AG04449 (cell line): ENCODE measurements at regions of chr17 and their contacts with region 1.

Region 1: GRCh38 chr17:42193969-42194899 is at the start of gene GHDC:
- DNase-seq: peak; percentile 10
- H3K4me3 ChIP-seq: peak within 1 kb of the TSS; percentile 81
- CTCF ChIP-seq: no peak

Region 2: DNA sequence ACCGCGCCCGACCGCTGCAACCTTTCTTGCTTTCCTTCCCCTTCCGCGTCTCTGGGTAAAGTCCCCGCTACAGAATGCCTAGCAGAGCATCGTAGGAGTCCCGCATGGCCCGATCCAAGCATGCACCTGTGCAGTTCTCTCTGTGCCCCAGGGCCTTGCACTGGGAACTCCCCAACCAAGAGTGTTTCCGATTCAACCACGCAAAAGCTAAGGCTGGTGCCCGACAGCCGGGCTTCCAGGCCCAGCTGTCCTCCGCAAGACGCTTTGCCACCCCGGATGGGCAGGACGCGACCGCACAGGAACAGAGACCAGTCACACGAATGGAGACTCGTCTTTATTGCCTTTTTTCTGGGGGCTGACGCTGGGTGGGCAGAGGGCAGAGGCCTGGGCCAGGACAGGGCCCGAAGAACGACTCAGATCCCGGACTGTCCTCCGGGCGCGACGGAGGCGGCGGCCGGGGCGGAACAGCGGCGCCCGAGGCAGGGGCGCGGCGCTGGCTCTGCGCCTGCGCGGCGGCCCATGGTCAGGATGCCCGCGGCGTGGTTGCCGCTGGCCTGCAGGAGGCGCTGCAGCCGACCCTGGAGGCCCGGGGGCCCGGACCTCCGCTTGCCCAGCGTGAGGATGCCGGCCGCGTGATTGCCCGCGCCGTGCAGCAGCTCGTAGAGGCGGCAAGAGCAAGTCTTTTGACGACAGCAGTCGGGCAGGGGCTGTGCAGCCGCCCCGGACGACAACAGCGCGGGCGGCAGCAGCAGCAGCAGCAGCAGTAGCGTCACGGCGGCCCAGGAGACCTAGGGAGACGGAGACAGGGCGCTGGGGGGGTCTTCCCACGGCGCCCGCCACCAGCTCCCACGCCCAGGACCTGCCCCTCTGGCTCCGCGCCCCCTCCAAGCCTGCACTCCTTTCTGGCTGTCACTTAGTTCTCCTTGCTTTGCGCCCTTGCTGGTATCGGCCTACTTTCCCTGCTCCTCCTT is 10.2 kb before region 1 on chr17:
- CTCF ChIA-PET with region 1: interaction called, 44 read pairs
- POLR2A ChIA-PET with region 1: no interaction called
- DNase-seq: no peak
- H3K4me3 ChIP-seq: peak overlapping the region; percentile 63
- CTCF ChIP-seq: peak; percentile 82